ENCODE measurements at regions of chr3 and their contacts with region 1.

Region 1: DNA sequence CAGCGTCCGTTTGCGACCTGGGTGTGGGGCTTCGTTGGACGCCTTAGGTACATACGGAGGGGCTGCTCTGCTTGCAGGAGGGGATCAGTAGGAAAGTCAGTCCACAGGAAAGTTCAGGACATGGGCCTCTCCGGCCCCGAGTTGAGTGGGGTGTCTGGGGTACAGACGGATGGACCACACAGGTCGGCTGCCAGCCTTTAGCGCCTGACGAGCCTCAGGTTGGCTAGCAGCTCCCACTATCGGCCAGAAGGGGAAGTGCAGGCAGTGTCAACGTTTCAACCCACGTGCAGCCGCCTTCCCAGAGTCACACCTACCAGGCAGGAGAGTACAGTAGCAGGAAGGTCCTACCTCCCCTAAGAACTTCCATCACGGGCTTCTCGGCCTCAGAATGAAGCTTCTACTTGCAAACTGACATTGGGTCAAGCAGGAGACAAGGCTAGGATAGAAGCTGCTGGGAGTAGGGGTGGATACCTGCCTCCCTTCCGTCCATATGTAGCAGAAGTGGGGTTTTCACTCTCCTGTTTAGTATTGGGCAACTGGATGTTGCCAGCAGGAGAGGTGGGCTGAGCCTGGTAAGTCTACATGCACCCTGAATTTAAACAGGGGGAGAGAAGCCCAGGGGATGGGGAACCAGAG is 1.8 kb upstream of the SCN5A start:
- DNase-seq: peak; percentile 38 to 73 (median 66)
- ATAC-seq: peak; percentile 73
- H3K4me3 ChIP-seq: peak overlapping the region; percentile 34
- H3K4me3 Mint-ChIP-seq: no peak overlapping the region
- H3K27ac ChIP-seq: no peak overlapping the region
- H3K27ac Mint-ChIP-seq: no peak overlapping the region
- H3K4me1 ChIP-seq: peaks cover 5 to 6% of the 10 kb centered on the region in 2 donors
- H3K4me1 Mint-ChIP-seq: peaks cover 0 to 10% (median 8%) of the 10 kb centered on the region in 7 donors
- H3K27me3 ChIP-seq: peaks cover 10 to 11% of the 10 kb centered on the region in 2 donors
- H3K27me3 Mint-ChIP-seq: peaks cover 4 to 23% (median 16%) of the 10 kb centered on the region in 5 donors

Region 2: DNA sequence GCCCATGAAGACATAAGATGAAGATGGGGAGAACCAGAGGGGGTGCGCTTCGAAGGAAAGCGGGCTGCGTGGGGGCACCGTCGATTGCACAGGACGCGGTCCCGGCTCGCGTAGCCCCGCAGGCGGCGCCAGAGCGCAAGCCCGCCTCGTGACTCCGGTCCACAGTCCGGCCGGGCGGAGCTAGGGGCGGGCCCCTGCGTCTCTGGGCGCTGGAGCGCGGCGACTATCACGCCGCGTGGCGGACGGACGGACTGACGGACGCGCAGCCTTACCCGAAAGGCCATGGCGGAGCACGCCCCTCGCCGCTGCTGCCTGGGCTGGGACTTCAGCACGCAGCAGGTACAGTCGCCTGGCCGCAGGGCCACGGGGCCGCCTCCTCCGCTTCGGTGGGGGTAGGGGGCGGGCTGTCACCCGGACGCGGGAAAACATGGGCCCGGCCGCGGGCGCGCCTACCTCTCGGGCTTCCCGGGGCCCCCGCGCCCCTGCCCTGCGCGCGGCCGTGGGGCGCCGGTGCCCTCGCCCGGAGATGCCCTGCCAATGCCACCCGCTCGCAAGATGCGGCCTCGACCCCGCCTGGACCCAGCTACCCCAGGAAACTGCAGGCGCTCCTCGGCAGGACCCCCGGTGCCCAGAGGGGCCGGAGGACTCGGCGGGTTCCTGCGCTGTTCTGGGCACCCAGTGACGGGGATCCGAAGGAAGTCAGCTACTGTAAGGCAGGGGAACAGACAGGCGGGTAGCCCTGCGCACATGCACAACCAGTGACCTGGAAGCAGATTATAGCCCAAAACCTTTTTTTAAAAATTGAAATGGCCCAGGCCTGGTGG is 304.5 kb before region 1 on chr3 and contains the start of gene XYLB:
- CTCF ChIA-PET with region 1: interaction called, 4 read pairs
- POLR2A ChIA-PET with region 1: no interaction called
- intact Hi-C with region 1: loop called (anchors 2 to 5 kb)
- DNase-seq: peak; percentile 48 to 89 (median 67)
- ATAC-seq: peak; percentile 99
- H3K4me3 ChIP-seq: peak within 1 kb of the TSS; percentile 62
- H3K4me3 Mint-ChIP-seq: peak within 1 kb of the TSS; percentile 71 to 91 (median 83)
- H3K27ac ChIP-seq: peak within 1 kb of the TSS; percentile 61
- H3K27ac Mint-ChIP-seq: peak within 1 kb of the TSS in 3 of 9 donors; percentile 54 to 61 (median 54)
- H3K4me1 ChIP-seq: no peaks in the 10 kb centered on the region
- H3K4me1 Mint-ChIP-seq: peaks cover 2 to 7% (median 5%) of the 10 kb centered on the region in 7 donors
- H3K27me3 ChIP-seq: no peaks in the 10 kb centered on the region
- H3K27me3 Mint-ChIP-seq: peaks cover 0 to 4% (median 0%) of the 10 kb centered on the region in 5 donors
- total RNA-seq, gene XYLB: 1.00 to 6.7 (median 2.1) TPM

Region 3: GRCh38 chr3:38453075-38453912 is 198.0 kb before region 1 on chr3 and contains the start of gene ACVR2B:
- CTCF ChIA-PET with region 1: no interaction called
- POLR2A ChIA-PET with region 1: no interaction called
- intact Hi-C with region 1: loop called in 1 of 2 experiments (anchors 1 kb)
- DNase-seq: peak; percentile 20 to 83 (median 58)
- ATAC-seq: peak; percentile 74
- H3K4me3 ChIP-seq: peak within 1 kb of the TSS; percentile 74
- H3K4me3 Mint-ChIP-seq: peak within 1 kb of the TSS; percentile 88 to 99 (median 97)
- H3K27ac ChIP-seq: peak within 1 kb of the TSS; percentile 60
- H3K27ac Mint-ChIP-seq: peak within 1 kb of the TSS; percentile 59 to 95 (median 91)
- H3K4me1 ChIP-seq: peaks cover 5 to 12% of the 10 kb centered on the region in 2 donors
- H3K4me1 Mint-ChIP-seq: peaks cover 7 to 32% (median 25%) of the 10 kb centered on the region in 7 donors
- H3K27me3 ChIP-seq: no peaks in the 10 kb centered on the region
- H3K27me3 Mint-ChIP-seq: peaks cover 0 to 18% (median 0%) of the 10 kb centered on the region in 5 donors
- total RNA-seq, gene ACVR2B: 3.8 to 14.0 (median 8.3) TPM

Region 4: DNA sequence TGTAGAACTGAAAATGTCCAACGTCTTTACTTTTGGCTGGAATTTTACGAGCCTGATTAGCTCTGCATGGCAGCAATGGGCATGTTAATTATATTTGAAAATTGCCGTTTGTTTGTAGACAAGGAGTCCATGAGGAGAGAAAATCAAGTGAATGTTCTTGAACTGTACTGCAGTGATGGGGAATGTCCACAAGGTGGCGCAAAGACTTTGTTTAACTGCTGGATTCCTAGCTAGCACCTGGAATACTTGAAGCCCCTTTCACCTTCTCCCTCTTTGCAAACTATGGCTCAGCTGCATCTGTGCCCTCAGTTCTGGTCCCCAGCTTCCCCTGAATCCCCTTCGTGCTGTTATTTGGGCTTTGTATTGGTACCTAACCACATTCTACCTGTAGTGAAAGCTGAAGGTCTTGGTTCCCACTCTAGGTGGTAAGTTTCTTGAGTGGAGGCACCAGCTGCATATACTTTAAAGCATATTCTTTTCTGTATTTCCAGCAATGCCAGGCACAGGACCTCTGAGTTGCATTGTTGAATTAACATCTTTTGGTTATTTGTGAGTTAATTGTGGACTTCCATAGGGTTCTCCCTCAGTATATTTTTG is 129.8 kb before region 1 on chr3:
- CTCF ChIA-PET with region 1: interaction called, 28 read pairs
- POLR2A ChIA-PET with region 1: no interaction called
- intact Hi-C with region 1: loop called (anchors 1 kb)
- DNase-seq: peak in 8 of 9 donors; percentile 34 to 66 (median 58)
- ATAC-seq: peak; percentile 83
- H3K4me3 ChIP-seq: no peak overlapping the region
- H3K4me3 Mint-ChIP-seq: peak overlapping the region in 1 of 10 donors; percentile 12
- H3K27ac ChIP-seq: no peak overlapping the region
- H3K27ac Mint-ChIP-seq: peak overlapping the region in 4 of 9 donors; percentile 2 to 92 (median 35)
- H3K4me1 ChIP-seq: peaks cover 21 to 30% of the 10 kb centered on the region in 2 donors
- H3K4me1 Mint-ChIP-seq: peaks cover 12 to 45% (median 35%) of the 10 kb centered on the region in 7 donors
- H3K27me3 ChIP-seq: no peaks in the 10 kb centered on the region
- H3K27me3 Mint-ChIP-seq: no peaks in the 10 kb centered on the region

Region 5: GRCh38 chr3:38843898-38844297 is 192.6 kb after region 1 on chr3:
- CTCF ChIA-PET with region 1: no interaction called
- POLR2A ChIA-PET with region 1: no interaction called
- intact Hi-C with region 1: loop called in 1 of 2 experiments (anchors 5 kb)
- DNase-seq: no peak
- ATAC-seq: no peak
- H3K4me3 ChIP-seq: no peak overlapping the region
- H3K4me3 Mint-ChIP-seq: no peak overlapping the region
- H3K27ac ChIP-seq: no peak overlapping the region
- H3K27ac Mint-ChIP-seq: no peak overlapping the region
- H3K4me1 ChIP-seq: no peaks in the 10 kb centered on the region
- H3K4me1 Mint-ChIP-seq: peaks cover 0 to 2% (median 0%) of the 10 kb centered on the region in 7 donors
- H3K27me3 ChIP-seq: no peaks in the 10 kb centered on the region
- H3K27me3 Mint-ChIP-seq: peaks cover 29 to 36% (median 31%) of the 10 kb centered on the region in 5 donors

Region 6: DNA sequence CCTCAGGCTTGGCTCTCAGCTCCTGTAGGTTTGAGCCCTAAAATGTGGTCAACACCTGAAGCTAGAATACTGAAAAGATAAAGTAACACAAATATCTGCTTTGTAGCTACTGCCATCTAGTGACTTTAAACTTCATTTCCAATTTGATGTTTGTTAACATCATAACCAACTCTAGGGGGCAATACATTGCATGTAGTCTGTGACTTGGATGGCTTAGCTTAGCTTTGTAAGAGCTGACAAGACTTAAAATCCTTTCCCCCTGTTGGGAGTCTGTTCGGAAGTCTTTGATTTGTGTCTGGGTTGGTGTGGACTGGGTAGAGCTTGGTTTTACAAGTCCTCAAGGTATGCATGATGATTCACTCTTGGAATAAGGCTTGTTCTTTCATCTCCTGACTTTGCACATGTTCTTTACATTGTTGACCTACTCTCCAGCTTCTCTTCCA is 348.8 kb after region 1 on chr3:
- CTCF ChIA-PET with region 1: no interaction called
- POLR2A ChIA-PET with region 1: no interaction called
- intact Hi-C with region 1: loop called in 1 of 2 experiments (anchors 2 kb)
- DNase-seq: peak in 6 of 9 donors; percentile 14 to 39 (median 32)
- ATAC-seq: peak; percentile 50
- H3K4me3 ChIP-seq: no peak overlapping the region
- H3K4me3 Mint-ChIP-seq: no peak overlapping the region
- H3K27ac ChIP-seq: no peak overlapping the region
- H3K27ac Mint-ChIP-seq: no peak overlapping the region
- H3K4me1 ChIP-seq: no peaks in the 10 kb centered on the region
- H3K4me1 Mint-ChIP-seq: peaks cover 0 to 2% (median 0%) of the 10 kb centered on the region in 7 donors
- H3K27me3 ChIP-seq: no peaks in the 10 kb centered on the region
- H3K27me3 Mint-ChIP-seq: peaks cover 5 to 16% (median 13%) of the 10 kb centered on the region in 5 donors